HAP-1 (cell line): ENCODE measurements at regions of chr11 and their contacts with region 1.

Region 1: GRCh38 chr11:108863528-108863927 is 198.7 kb downstream of the DDX10 start:
- DNase-seq: no peak
- H3K4me3 ChIP-seq: no peak overlapping the region
- H3K4me1 ChIP-seq: peaks cover 17% of the 10 kb centered on the region
- H3K27me3 ChIP-seq: no peaks in the 10 kb centered on the region

Region 2: DNA sequence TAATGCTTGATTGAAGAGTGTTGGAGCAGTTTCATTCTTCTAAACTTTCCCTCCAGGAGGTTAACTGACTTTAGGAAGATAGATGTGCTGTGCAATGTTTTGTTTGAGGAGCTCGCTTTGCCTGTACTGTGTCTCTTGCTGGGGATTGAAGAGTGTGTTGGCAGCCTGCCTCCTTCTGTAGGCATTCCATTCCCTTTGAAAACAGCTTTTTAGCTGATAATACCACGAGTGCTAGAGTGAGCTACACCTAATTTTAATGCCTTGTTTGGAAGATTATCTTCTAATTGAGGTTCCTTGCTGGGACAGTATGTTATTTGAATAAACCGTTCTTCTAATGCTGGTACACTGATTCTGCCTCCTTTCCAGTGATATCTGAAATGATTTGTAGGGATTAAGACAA is 191.4 kb before region 1 on chr11:
- in situ Hi-C with region 1: loop called (anchors 10 kb)
- DNase-seq: peak; percentile 73 to 91
- H3K4me3 ChIP-seq: no peak overlapping the region
- H3K4me1 ChIP-seq: peaks cover 16% of the 10 kb centered on the region
- H3K27me3 ChIP-seq: no peaks in the 10 kb centered on the region